ENCODE measurements at regions of chr18 and their contacts with region 1.

Region 1: GRCh38 chr18:13464432-13465123 is 246.0 kb downstream of the LDLRAD4 start:
- DNase-seq: peak; percentile 94
- H3K4me3 ChIP-seq: peak overlapping the region in 1 of 3 experiments; percentile 39
- H3K27ac ChIP-seq: peak overlapping the region; percentile 98
- H3K4me1 ChIP-seq: peaks cover 24% of the 10 kb centered on the region
- H3K27me3 ChIP-seq: no peaks in the 10 kb centered on the region
- CTCF ChIP-seq: no peak
- POLR2A ChIP-seq: peak; percentile 54

Region 2: GRCh38 chr18:13381944-13382365 is 82.6 kb before region 1 on chr18:
- CTCF ChIA-PET with region 1: no interaction called
- POLR2A ChIA-PET with region 1: no interaction called
- dilution Hi-C with region 1: no loop called
- intact Hi-C with region 1: loop called (anchors 1 kb)
- DNase-seq: peak; percentile 71
- H3K4me3 ChIP-seq: peak overlapping the region in 1 of 3 experiments; percentile 49
- H3K27ac ChIP-seq: peak overlapping the region; percentile 94
- H3K4me1 ChIP-seq: peaks cover 31% of the 10 kb centered on the region
- H3K27me3 ChIP-seq: no peaks in the 10 kb centered on the region
- CTCF ChIP-seq: no peak
- POLR2A ChIP-seq: no peak

Region 3: GRCh38 chr18:13447626-13448334 is 16.8 kb before region 1 on chr18:
- CTCF ChIA-PET with region 1: interaction called, 3 read pairs
- POLR2A ChIA-PET with region 1: no interaction called
- dilution Hi-C with region 1: no loop called
- intact Hi-C with region 1: loop called (anchors 1 kb)
- DNase-seq: peak; percentile 56
- H3K4me3 ChIP-seq: no peak overlapping the region
- H3K27ac ChIP-seq: no peak overlapping the region
- H3K4me1 ChIP-seq: no peaks in the 10 kb centered on the region
- H3K27me3 ChIP-seq: no peaks in the 10 kb centered on the region
- CTCF ChIP-seq: no peak
- POLR2A ChIP-seq: no peak

Region 4: GRCh38 chr18:13530879-13531387 is 66.4 kb after region 1 on chr18:
- CTCF ChIA-PET with region 1: interaction called, 5 read pairs
- POLR2A ChIA-PET with region 1: no interaction called
- dilution Hi-C with region 1: no loop called
- intact Hi-C with region 1: loop called (anchors 10 kb)
- DNase-seq: peak; percentile 79
- H3K4me3 ChIP-seq: no peak overlapping the region
- H3K27ac ChIP-seq: no peak overlapping the region
- H3K4me1 ChIP-seq: no peaks in the 10 kb centered on the region
- H3K27me3 ChIP-seq: peaks cover 0 to 5% of the 10 kb centered on the region in 2 experiments
- CTCF ChIP-seq: peak; percentile 59 to 75
- POLR2A ChIP-seq: no peak

Region 5: DNA sequence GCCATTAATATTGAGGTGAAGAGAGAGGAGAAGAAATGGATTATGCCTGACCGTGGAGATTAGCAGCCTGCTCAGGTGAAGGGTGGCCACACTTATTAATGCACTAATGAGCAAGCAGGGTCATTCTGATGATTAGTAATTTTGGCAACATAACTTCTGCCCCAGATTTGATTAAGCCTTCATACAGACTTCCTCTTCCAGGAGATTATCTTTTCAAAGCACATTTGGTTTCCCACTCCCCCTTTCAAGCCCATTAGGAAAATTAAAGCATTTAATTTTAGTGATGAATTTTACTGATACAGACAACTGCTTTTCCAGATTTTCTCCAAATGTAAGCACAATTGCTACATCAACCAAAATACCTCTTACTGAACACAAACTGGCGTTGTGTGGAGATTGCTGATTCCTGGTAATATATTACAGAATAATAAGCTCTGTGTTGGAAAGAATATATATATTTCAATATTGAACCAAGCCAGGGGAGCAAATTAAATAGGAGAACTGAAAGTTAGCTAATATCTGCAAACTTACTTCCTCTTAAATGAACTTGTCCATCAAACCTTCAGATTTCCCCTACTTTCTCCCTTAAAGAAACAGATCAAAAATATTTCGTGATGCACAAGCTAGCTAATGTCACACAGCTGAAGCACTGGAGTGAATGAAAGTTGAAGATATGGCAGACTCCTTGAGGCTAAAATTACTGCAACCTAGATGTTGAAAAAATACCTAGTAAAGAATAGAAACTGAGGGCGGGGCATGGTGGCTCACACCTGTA is 121.0 kb after region 1 on chr18:
- CTCF ChIA-PET with region 1: no interaction called
- POLR2A ChIA-PET with region 1: no interaction called
- dilution Hi-C with region 1: no loop called
- intact Hi-C with region 1: no loop called
- DNase-seq: no peak
- H3K4me3 ChIP-seq: no peak overlapping the region
- H3K27ac ChIP-seq: no peak overlapping the region
- H3K4me1 ChIP-seq: no peaks in the 10 kb centered on the region
- H3K27me3 ChIP-seq: peaks cover 0 to 4% of the 10 kb centered on the region in 2 experiments
- CTCF ChIP-seq: no peak
- POLR2A ChIP-seq: no peak

Measured in endothelial cell of umbilical vein (primary cell).